Activated CD4-positive, alpha-beta T cell treated with anti-CD3 and anti-CD28 coated beads, Interleukin-2, amount 10 ng/mL, durations not matched to agents 24 days and 14 days (primary cell): ENCODE measurements at regions of chr12 and their contacts with region 1.

Region 1: GRCh38 chr12:120327593-120327992 is at the start of gene PLA2G1B:
- DNase-seq: no peak
- H3K4me3 Mint-ChIP-seq: no peak within 1 kb of the TSS
- H3K27ac Mint-ChIP-seq: no peak within 1 kb of the TSS
- H3K4me1 Mint-ChIP-seq: peaks cover 9% of the 10 kb centered on the region
- H3K27me3 Mint-ChIP-seq: peaks cover 8% of the 10 kb centered on the region
- total RNA-seq, gene PLA2G1B: not detected in 2 replicates

Region 2: GRCh38 chr12:120314220-120314619 is 13.4 kb before region 1 on chr12:
- intact Hi-C with region 1: no loop called
- DNase-seq: no peak
- H3K4me3 Mint-ChIP-seq: no peak overlapping the region
- H3K27ac Mint-ChIP-seq: no peak overlapping the region
- H3K4me1 Mint-ChIP-seq: peaks cover 12% of the 10 kb centered on the region
- H3K27me3 Mint-ChIP-seq: peaks cover 3% of the 10 kb centered on the region

Region 3: GRCh38 chr12:120361506-120362208 is 34.1 kb after region 1 on chr12:
- intact Hi-C with region 1: loop called (anchors 5 kb)
- DNase-seq: no peak
- H3K4me3 Mint-ChIP-seq: no peak overlapping the region
- H3K27ac Mint-ChIP-seq: no peak overlapping the region
- H3K4me1 Mint-ChIP-seq: peaks cover under 1% of the 10 kb centered on the region
- H3K27me3 Mint-ChIP-seq: peaks cover 68% of the 10 kb centered on the region

Region 4: GRCh38 chr12:120649442-120650232 is 322.0 kb after region 1 on chr12:
- intact Hi-C with region 1: loop called (anchors 5 kb)
- DNase-seq: no peak
- H3K4me3 Mint-ChIP-seq: peak overlapping the region; percentile 62
- H3K27ac Mint-ChIP-seq: no peak overlapping the region
- H3K4me1 Mint-ChIP-seq: peaks cover 12% of the 10 kb centered on the region
- H3K27me3 Mint-ChIP-seq: peaks cover 53% of the 10 kb centered on the region